ENCODE measurements at regions of chr6 and their contacts with region 1.

Region 1: DNA sequence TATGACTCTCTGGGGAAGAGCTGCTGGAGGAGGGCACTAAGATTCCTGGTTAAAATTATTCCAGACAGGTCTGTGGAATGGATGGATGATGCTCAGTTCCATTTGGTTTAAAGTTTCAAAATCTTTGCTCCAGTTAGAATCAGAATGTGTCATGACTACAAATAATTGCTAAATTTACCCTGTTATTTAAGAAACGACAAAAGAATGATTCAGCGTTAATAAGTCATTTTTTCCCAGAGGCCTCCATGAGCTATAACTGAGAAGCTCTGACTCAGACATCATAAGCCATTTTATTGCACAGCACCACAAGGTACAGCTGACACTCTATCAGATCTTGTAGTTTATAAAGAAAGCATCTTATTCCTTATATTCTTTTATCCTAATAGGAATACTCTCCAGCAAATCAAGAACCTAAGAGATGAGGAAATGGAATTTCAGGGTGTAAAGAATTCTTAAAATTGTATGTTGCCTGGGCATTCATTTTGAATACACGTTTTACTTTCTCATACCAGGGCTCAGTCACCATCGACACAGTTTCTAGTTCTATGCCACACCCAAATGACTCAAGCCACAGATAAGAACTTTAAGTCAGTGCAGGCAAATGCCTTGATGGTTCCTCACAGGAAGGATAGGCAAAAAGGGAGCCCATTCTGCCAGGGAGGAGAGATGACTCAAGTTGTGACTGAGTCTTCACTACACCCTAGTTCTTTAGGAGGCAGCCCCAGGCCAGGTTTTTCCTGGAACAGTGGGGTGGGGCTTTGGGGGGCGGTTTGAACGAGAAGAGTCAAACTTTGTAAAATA is 636.0 kb downstream of the MMUT start:
- DNase-seq: peak; percentile 99
- ATAC-seq: peak; percentile 88
- H3K4me3 ChIP-seq: peak overlapping the region; percentile 55
- H3K27ac ChIP-seq: peak overlapping the region; percentile 99
- H3K4me1 ChIP-seq: peaks cover 45% of the 10 kb centered on the region
- H3K27me3 ChIP-seq: no peaks in the 10 kb centered on the region
- CTCF ChIP-seq: no peak

Region 2: GRCh38 chr6:48087448-48087847 is 739.7 kb before region 1 on chr6:
- CTCF ChIA-PET with region 1: no interaction called
- POLR2A ChIA-PET with region 1: no interaction called
- intact Hi-C with region 1: loop called (anchors 5 kb)
- DNase-seq: peak; percentile 68
- ATAC-seq: peak; percentile 48; the same call in 1 of the 2 replicates
- H3K4me3 ChIP-seq: no peak overlapping the region
- H3K27ac ChIP-seq: no peak overlapping the region
- H3K4me1 ChIP-seq: no peaks in the 10 kb centered on the region
- H3K27me3 ChIP-seq: no peaks in the 10 kb centered on the region
- CTCF ChIP-seq: peak; percentile 66

Region 3: DNA sequence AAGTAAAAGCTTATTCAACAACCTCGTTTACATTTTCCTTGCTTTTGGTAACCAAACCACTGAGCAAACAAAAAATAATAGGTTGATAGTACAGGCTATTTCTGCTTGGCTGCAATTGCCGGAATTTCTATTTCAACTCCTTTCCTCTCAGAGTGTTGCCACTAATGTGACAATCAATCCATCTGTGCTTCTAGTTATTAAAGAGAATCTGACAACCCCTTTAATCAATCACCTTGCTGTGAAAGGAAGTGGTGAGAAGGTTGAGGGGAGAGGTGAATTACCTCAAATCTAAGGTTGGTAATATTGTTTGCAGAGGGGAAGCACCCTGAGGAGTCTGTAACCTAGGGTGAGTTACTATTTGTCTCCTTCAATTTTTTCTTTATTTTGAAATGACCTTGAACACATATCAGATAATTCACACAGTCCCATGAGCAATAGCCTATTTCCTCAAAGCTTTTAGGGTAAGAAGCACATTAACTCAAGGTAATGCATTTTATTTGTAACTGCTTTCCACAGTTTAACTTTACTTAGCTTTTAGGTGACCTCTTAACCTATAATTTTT is 32.5 kb after region 1 on chr6:
- CTCF ChIA-PET with region 1: no interaction called
- POLR2A ChIA-PET with region 1: no interaction called
- intact Hi-C with region 1: no loop called
- DNase-seq: no peak
- ATAC-seq: no peak
- H3K4me3 ChIP-seq: no peak overlapping the region
- H3K27ac ChIP-seq: no peak overlapping the region
- H3K4me1 ChIP-seq: no peaks in the 10 kb centered on the region
- H3K27me3 ChIP-seq: no peaks in the 10 kb centered on the region
- CTCF ChIP-seq: no peak

Region 4: DNA sequence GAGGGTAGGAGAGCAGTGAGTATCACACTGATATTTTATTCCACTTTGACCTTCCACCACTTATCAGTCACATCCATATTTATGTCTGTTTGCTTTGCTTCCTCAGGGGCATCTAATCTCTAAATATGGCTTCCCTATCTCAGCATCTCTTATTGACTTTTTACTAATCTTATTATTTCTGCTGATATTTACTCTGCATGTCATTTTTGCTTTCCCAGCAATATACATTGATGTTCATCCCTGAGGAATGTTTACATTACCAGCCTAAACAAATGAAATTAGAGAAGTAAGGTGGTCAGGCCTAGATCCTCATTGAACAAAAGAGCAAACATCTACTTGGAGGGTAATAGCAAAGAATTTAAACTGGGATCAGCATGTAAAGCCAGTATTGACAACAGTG is 89.5 kb after region 1 on chr6:
- CTCF ChIA-PET with region 1: no interaction called
- POLR2A ChIA-PET with region 1: no interaction called
- intact Hi-C with region 1: loop called (anchors 1 kb)
- DNase-seq: peak; percentile 92
- ATAC-seq: peak; percentile 97
- H3K4me3 ChIP-seq: no peak overlapping the region
- H3K27ac ChIP-seq: peak overlapping the region; percentile 96
- H3K4me1 ChIP-seq: peaks cover 40% of the 10 kb centered on the region
- H3K27me3 ChIP-seq: no peaks in the 10 kb centered on the region
- CTCF ChIP-seq: no peak

Region 5: DNA sequence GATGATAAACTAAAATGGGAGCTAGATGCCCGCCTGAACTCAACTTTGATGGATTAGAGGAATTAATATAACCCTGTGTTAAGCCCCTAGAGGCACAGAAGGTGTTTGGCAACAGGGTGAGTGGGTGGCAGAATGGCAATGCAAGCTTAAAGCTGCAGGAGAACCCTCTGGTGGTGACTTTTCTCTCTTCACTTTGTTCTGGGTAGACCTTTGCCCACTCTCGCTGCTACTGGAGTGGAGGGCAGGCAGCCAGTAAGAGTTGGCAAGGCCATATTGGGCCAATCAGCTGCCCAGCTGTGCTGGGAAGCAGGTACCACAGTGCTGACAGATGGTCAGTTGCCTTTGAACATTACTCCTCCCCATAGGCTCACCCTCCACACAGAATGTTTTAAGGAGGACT is 167.7 kb after region 1 on chr6:
- CTCF ChIA-PET with region 1: no interaction called
- POLR2A ChIA-PET with region 1: no interaction called
- intact Hi-C with region 1: no loop called
- DNase-seq: peak; percentile 5
- ATAC-seq: no peak
- H3K4me3 ChIP-seq: no peak overlapping the region
- H3K27ac ChIP-seq: no peak overlapping the region
- H3K4me1 ChIP-seq: no peaks in the 10 kb centered on the region
- H3K27me3 ChIP-seq: no peaks in the 10 kb centered on the region
- CTCF ChIP-seq: peak; percentile 34; the same call in 1 of the 2 replicates

Region 6: GRCh38 chr6:49052901-49053300 is 225.8 kb after region 1 on chr6:
- CTCF ChIA-PET with region 1: no interaction called
- POLR2A ChIA-PET with region 1: no interaction called
- intact Hi-C with region 1: loop called (anchors 2 kb)
- DNase-seq: peak; percentile 57
- ATAC-seq: no peak
- H3K4me3 ChIP-seq: no peak overlapping the region
- H3K27ac ChIP-seq: peak overlapping the region; percentile 94
- H3K4me1 ChIP-seq: peaks cover 44% of the 10 kb centered on the region
- H3K27me3 ChIP-seq: no peaks in the 10 kb centered on the region
- CTCF ChIP-seq: no peak

Region 7: DNA sequence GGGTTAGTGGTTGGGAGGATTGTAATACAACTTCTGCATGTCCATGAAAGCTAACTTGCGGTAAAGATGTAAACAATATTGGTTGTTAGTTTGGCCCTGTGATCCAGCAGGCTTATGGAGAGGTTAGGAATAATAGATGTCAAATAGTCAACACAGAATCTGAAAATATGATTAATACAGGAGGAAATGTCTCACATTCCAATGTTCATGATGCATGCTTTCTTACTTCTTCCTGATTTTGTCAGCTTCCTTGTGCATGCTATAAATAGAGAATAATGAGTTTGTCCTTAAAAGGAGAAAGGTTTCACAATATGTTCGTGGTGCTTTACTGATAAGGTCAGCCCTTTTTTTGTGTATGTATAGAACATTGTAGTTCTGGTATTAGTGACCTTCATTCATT is 499.2 kb after region 1 on chr6:
- CTCF ChIA-PET with region 1: no interaction called
- POLR2A ChIA-PET with region 1: interaction called, 3 read pairs
- intact Hi-C with region 1: loop called (anchors 1 kb)
- DNase-seq: peak; percentile 85
- ATAC-seq: peak; percentile 94
- H3K4me3 ChIP-seq: peak overlapping the region; percentile 36; the same call in 1 of the 2 replicates
- H3K27ac ChIP-seq: peak overlapping the region; percentile 67
- H3K4me1 ChIP-seq: peaks cover 23% of the 10 kb centered on the region
- H3K27me3 ChIP-seq: no peaks in the 10 kb centered on the region
- CTCF ChIP-seq: no peak

Region 8: DNA sequence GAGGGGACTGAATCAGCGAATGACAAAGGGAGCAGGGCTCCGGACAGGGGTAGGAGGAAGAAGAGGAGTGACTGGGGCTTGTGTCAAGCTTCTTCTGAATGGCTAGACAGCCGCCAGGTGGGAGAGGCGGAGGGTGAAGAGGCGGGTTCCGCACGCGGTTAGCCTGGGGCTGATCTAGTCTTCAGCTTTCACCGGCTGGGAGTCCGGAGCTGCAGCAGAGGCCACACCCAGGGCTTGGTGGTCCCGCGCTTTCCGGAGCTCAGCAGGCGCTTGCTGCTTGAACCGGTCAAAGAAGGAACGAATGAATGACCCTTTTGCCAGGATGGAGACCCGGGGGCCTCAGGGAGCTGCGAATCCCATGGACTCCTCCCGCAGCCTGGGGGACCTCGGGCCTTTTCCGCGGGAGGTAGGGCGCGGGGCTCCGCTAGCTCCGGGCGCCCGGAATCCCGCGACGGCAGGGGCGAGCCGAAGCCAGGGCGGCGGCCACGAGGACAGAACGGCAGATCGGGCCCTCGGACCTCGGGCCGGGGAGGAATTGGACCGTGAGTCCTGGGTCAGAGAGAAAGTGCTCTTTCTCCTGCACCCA is 723.5 kb after region 1 on chr6 and contains the start of gene C6orf141:
- CTCF ChIA-PET with region 1: no interaction called
- POLR2A ChIA-PET with region 1: no interaction called
- intact Hi-C with region 1: no loop called
- DNase-seq: peak; percentile 94
- ATAC-seq: peak; percentile 87
- H3K4me3 ChIP-seq: peak within 1 kb of the TSS; percentile 90
- H3K27ac ChIP-seq: peak within 1 kb of the TSS; percentile 74
- H3K4me1 ChIP-seq: peaks cover 35% of the 10 kb centered on the region
- H3K27me3 ChIP-seq: no peaks in the 10 kb centered on the region
- CTCF ChIP-seq: no peak
- total RNA-seq, gene C6orf141: 43.8 and 49.4 TPM in 2 replicates